ENCODE measurements at regions of chr1 and their contacts with region 1.

Region 1: DNA sequence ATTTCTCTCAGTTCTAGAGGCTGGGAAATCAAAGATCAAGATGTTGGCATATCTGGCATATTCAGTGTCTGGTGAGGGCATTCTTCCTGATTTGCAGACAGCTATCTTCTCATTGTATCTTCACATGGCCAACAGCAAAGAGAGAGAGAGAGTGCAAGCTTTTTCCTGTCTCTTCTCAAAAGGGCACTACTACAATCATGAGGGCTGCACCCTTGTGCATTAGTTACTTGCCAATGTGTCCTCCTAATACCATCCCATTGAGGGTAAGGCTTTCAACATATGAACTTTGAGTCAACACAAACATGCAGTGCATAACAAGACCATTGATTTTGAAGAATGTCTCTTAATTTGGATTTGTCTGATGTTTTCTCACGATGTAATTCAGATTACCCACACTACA is 78.0 kb downstream of the CCDC30 start:
- DNase-seq: no peak
- H3K4me3 ChIP-seq: no peak overlapping the region
- H3K27ac ChIP-seq: no peak overlapping the region
- H3K4me1 ChIP-seq: no peaks in the 10 kb centered on the region
- H3K27me3 ChIP-seq: no peaks in the 10 kb centered on the region
- CTCF ChIP-seq: no peak
- POLR2A ChIP-seq: no peak

Region 2: DNA sequence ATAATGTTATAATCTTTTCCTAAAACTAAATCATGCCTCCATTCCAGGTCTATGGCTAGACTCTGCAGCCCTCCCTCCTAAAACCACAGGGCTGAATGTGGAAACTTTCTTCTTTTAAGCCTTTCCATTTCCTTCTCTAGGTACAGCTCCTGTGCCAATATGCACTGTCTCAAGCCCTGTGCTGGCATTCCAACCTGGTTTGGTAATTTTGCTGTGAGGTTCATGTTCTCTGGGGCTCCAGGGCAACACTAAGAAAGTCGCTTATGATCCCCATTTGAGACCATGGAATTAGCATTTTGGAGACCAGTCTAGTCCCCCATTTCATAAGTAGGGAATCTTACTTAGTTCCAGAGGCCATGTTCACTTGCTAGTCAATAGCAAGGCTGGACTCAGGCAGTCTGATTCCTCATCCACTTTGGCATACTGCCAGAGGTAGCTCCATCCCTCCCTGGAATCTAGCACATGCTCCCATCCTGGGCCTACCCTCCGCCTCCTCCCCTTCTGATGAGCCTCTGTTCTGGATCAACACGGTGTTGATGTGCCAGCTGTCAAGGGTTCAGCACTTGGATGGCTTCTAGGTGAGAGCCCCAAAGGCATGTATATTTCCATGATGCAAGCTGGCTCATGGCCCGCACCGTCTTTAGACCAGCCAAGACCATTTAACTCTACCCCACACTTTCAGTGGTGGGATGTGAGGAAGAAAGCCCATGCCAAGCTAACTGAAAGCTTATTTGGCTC is 121.8 kb before region 1 on chr1:
- intact Hi-C with region 1: loop called (anchors 10 kb)
- DNase-seq: no peak
- H3K4me3 ChIP-seq: no peak overlapping the region
- H3K27ac ChIP-seq: no peak overlapping the region
- H3K4me1 ChIP-seq: peaks cover 7% of the 10 kb centered on the region
- H3K27me3 ChIP-seq: no peaks in the 10 kb centered on the region
- CTCF ChIP-seq: no peak
- POLR2A ChIP-seq: no peak

Region 3: GRCh38 chr1:42886800-42887199 is 345.7 kb after region 1 on chr1:
- intact Hi-C with region 1: no loop called
- DNase-seq: no peak
- H3K4me3 ChIP-seq: no peak overlapping the region
- H3K27ac ChIP-seq: no peak overlapping the region
- H3K4me1 ChIP-seq: no peaks in the 10 kb centered on the region
- H3K27me3 ChIP-seq: no peaks in the 10 kb centered on the region
- CTCF ChIP-seq: no peak
- POLR2A ChIP-seq: no peak

Measured in testis (tissue), 5 donors.